ENCODE measurements at regions of chr18 and their contacts with region 1.

Region 1: DNA sequence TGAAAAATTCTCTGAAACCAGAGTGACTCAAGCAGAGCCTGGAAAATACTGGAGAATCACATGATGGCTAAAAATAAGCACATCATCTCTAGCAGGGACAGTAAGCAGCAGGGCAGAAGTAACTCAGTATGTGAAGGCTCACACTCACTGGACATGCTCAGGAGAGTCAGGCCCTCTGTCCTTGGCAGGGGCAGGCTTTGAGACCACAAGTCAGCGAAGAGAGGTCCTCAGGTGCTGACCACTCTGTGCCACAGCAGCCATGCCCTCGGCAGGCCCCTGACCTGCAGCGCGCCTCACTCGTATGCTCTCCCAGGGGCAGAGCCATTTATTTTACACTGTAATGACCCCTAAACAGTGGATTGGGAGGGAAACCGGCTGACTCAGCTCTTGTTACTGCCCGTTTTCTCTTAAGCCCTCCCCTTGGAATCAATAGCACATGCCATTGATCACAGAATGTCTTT is 76.8 kb downstream of the MAPRE2 start:
- DNase-seq: peak; percentile 70
- ATAC-seq: peak; percentile 94
- H3K4me3 ChIP-seq: no peak overlapping the region
- H3K27ac ChIP-seq: peak overlapping the region; percentile 88; the same call in 1 of the 2 replicates
- H3K4me1 ChIP-seq: peaks cover 9% of the 10 kb centered on the region
- H3K27me3 ChIP-seq: no peaks in the 10 kb centered on the region
- CTCF ChIP-seq: no peak
- POLR2A ChIP-seq: no peak
- RAD21 ChIP-seq: no peak

Region 2: GRCh38 chr18:35089891-35090550 is 28.0 kb before region 1 on chr18:
- CTCF ChIA-PET with region 1: no interaction called
- POLR2A ChIA-PET with region 1: no interaction called
- dilution Hi-C with region 1: no loop called
- in situ Hi-C with region 1: no loop called
- intact Hi-C with region 1: loop called (anchors 2 kb)
- DNase-seq: no peak
- ATAC-seq: 0 out of 2 replicates have a peak, but pooled peaks have one; percentile 27
- H3K4me3 ChIP-seq: no peak overlapping the region
- H3K27ac ChIP-seq: no peak overlapping the region
- H3K4me1 ChIP-seq: no peaks in the 10 kb centered on the region
- H3K27me3 ChIP-seq: no peaks in the 10 kb centered on the region
- CTCF ChIP-seq: no peak
- POLR2A ChIP-seq: no peak
- RAD21 ChIP-seq: no peak

Region 3: GRCh38 chr18:35386600-35387351 is 268.8 kb after region 1 on chr18:
- CTCF ChIA-PET with region 1: no interaction called
- POLR2A ChIA-PET with region 1: no interaction called
- dilution Hi-C with region 1: no loop called
- in situ Hi-C with region 1: no loop called
- intact Hi-C with region 1: no loop called
- DNase-seq: peak; percentile 82
- ATAC-seq: peak; percentile 90
- H3K4me3 ChIP-seq: no peak overlapping the region
- H3K27ac ChIP-seq: no peak overlapping the region
- H3K4me1 ChIP-seq: no peaks in the 10 kb centered on the region; the same call in 1 of the 2 replicates
- H3K27me3 ChIP-seq: peaks cover 5% of the 10 kb centered on the region
- CTCF ChIP-seq: peak; percentile 89
- POLR2A ChIP-seq: no peak
- RAD21 ChIP-seq: peak; percentile 74

Measured in IMR-90 (cell line).